Left cardiac atrium (tissue), 4 donors: ENCODE measurements at regions of chr14 and their contacts with region 1.

Region 1: DNA sequence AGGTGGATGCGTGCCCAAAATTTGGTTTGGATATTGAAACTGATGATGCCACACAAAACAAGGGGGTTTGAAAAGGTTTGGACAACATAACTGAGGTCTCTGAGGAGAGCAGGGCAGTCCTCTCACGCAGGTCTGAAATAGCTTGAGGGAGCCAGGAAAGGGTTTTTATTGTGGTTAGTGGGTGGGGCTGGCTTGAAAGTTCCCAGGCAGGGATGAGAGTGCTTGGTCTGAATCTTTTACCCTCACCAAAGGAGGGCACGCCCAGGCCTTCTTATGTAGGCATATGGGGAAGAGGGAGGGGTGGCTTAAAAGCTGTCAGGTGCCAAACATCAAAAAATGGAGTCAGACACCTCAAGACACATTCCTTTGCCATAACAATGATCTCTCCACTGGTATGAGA is 493.1 kb upstream of the CCDC196 start:
- DNase-seq: no peak
- ATAC-seq: no peak

Region 2: DNA sequence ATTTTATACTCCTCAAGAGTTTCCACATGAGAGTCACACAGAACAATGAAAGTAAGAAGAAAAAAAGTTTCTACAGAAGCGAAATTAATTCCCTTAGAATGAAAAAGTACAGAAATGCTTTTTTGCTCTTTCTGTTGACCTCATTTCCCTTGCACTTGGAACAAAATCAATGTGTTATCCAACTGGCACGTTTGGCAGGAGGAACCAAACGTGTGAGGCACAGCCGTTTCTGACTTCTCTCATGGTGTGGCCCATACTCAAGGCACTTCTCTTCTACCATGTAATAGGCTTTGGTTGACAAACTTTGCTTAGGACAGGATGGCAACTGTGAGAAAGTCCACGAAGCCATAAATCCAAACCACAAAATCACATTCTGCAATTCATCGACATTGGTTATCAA is 283.5 kb before region 1 on chr14:
- intact Hi-C with region 1: no loop called
- DNase-seq: no peak
- ATAC-seq: no peak

Region 3: DNA sequence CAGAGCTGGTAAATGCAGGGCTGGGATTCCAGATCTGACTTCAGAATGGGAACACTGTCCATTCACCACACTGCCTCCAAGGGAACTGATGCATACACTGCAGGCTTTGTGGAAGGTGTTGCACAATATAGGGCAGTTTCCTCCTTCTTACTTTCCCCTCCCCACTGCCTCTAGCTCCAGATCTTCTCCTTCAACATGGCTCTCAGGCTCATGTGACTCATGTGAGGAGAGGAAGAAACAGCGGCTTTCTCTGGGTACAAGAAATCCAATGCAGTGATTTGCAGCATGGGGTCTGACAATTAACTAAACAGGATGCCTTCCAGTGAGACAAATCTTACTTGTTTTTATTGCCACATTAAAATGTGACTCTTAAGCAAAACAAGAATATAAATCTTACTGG is 45.5 kb after region 1 on chr14:
- intact Hi-C with region 1: loop called in 1 of 2 experiments (anchors 5 kb)
- DNase-seq: no peak
- ATAC-seq: peak; percentile 84 to 92